ENCODE measurements at regions of chr4 and their contacts with region 1.

Region 1: DNA sequence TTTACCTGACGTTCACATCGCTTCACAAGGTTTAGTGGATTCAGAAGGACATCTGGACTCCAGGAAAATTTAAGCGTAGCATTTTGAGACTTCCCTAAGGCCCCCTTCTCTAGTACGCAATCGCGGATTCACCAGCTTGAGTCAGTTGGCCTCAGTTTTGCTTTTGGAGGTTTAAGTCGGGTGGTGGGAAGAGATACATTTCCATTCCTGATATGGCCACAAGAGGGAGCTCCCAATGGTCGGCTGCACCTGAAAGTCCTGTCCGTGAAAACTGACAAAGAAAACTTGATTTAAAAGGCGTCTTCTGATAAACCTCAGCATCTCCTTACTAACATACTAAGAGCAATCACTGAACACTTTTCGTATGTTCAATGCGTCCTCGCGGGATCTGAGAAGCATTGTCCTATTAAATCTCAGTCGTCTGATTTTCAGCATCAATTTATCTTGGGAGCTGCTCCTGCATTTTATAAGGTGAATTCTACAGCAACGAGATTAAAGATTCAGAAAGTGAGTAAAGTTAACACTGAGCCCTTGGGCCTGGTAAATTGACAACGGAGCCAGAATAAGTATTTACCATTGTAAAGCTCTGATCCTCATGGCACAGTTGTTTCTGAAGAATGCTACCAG is 50.6 kb downstream of the LGI2 start:
- DNase-seq: peak; percentile 56 to 67
- H3K4me3 ChIP-seq: peak overlapping the region; percentile 9 to 23
- H3K27ac ChIP-seq: peak overlapping the region in 1 of 2 donors; percentile 45
- H3K4me1 ChIP-seq: peaks cover 0 to 4% (median 0%) of the 10 kb centered on the region in 4 donors
- H3K27me3 ChIP-seq: no peaks in the 10 kb centered on the region
- CTCF ChIP-seq: peak; percentile 82 to 85

Region 2: GRCh38 chr4:24488399-24489164 is 491.6 kb before region 1 on chr4:
- intact Hi-C with region 1: loop called (anchors 10 kb)
- DNase-seq: peak; percentile 75 to 76
- H3K4me3 ChIP-seq: no peak overlapping the region
- H3K27ac ChIP-seq: no peak overlapping the region
- H3K4me1 ChIP-seq: no peaks in the 10 kb centered on the region
- H3K27me3 ChIP-seq: no peaks in the 10 kb centered on the region
- CTCF ChIP-seq: peak; percentile 69 to 83

Region 3: GRCh38 chr4:24642981-24643547 is 337.1 kb before region 1 on chr4:
- intact Hi-C with region 1: no loop called
- DNase-seq: no peak
- H3K4me3 ChIP-seq: no peak overlapping the region
- H3K27ac ChIP-seq: no peak overlapping the region
- H3K4me1 ChIP-seq: peaks cover 0 to 9% (median 0%) of the 10 kb centered on the region in 4 donors
- H3K27me3 ChIP-seq: no peaks in the 10 kb centered on the region
- CTCF ChIP-seq: no peak

Region 4: DNA sequence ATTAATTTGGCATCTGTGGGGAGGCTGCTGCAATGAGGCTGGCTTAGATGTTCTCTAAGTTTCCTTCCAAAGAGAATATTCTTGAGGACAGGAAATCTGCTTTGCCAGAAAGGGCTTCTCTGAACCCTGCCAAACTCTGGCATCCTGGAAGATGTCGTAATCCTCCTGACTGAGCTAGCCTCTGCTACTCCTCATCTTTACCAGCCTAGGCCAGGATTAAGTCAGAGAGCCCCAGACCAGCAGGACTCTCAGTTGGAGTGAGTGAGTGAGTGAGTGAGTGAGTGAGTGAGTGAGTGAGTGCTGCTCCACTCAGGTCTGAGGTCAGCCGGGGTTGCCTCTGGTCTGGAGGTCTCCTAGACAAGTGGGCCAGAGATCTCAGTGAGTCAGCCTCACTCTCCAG is 289.7 kb before region 1 on chr4:
- intact Hi-C with region 1: no loop called
- DNase-seq: no peak
- H3K4me3 ChIP-seq: no peak overlapping the region
- H3K27ac ChIP-seq: no peak overlapping the region
- H3K4me1 ChIP-seq: no peaks in the 10 kb centered on the region
- H3K27me3 ChIP-seq: no peaks in the 10 kb centered on the region
- CTCF ChIP-seq: no peak

Region 5: DNA sequence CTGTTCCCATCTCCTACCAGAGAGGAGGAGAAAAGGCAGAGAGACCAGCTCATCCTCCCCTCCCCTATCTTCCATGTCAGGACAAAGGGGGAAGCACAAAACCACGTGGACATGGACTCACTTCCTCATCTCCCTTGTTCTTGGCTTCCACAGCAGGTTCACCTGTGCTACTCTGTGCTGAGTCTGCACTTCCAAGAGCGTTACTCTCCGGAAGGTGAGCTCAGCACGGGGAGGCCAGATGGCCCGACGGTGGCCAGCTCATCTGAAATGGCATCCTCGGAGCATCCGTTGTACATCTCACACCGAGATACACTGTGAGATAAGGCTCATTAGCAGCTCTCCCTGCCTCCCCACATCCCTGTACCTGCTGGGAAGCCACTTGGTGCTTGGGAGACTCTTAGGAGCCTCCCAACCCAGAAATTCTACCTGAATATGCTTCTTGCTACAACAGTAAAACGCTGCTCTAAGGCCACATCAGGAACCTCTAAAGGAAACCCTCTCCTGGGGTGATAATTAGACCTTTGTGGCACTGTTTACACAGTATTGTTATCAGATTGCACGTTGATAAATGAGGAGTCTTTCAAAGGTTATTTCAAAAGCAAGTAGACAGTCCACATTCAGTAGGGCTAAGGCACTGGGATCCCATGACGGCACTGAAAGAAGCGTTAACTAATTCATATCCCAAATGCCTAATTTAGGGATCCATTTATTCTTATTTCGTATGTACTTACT is 31.1 kb after region 1 on chr4:
- intact Hi-C with region 1: loop called (anchors 1 kb)
- DNase-seq: no peak
- H3K4me3 ChIP-seq: no peak overlapping the region
- H3K27ac ChIP-seq: no peak overlapping the region
- H3K4me1 ChIP-seq: peaks cover 0 to 25% (median 2%) of the 10 kb centered on the region in 4 donors
- H3K27me3 ChIP-seq: no peaks in the 10 kb centered on the region
- CTCF ChIP-seq: no peak

Region 6: DNA sequence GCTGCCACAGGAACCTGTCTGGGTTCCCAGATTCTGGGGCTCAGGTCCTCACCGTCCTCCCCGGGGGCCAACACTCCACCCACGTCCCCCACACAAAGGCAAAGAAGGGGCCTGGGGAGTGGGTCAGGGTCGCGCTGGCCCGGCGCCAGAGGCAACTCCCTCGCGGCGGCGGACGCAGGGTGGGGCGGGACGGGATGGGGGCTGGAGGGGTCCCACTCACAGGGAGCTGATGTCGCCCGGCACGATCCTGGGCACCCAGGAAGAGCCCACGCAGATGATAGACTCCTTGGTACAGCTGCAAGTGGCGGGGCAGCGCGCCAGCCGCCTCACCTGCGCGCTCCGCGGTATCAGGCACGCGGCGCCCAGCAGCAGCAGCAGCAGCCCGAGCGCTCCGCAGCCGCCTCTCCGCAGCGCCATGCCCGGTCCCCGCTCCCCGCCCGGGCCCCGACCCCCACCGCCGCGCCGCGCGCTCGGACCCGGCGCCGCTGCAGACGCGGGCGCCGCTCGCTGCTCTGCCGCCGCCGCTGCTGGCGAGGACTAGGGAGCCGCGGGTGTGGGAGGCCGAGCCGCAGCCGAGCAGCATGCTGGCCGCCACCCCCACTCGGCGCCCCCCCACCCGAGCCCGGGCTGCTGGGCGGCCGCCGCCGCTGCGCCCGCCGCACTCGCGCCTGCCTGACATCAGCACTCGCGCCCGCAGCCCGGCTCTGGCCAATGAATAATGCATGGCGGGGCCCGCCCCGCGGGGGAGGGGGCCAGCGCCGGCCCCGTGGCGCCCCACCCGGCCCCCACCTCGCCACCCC is 50.3 kb after region 1 on chr4 and contains the start of gene LGI2:
- intact Hi-C with region 1: loop called (anchors 10 kb)
- DNase-seq: peak; percentile 51 to 80
- H3K4me3 ChIP-seq: peak within 1 kb of the TSS; percentile 61 to 64
- H3K27ac ChIP-seq: peak within 1 kb of the TSS; percentile 63 to 74
- H3K4me1 ChIP-seq: peaks cover 0 to 25% (median 14%) of the 10 kb centered on the region in 4 donors
- H3K27me3 ChIP-seq: no peaks in the 10 kb centered on the region
- CTCF ChIP-seq: no peak

Region 7: GRCh38 chr4:25144870-25145481 is 164.8 kb after region 1 on chr4:
- intact Hi-C with region 1: loop called (anchors 5 kb)
- DNase-seq: no peak
- H3K4me3 ChIP-seq: no peak overlapping the region
- H3K27ac ChIP-seq: no peak overlapping the region
- H3K4me1 ChIP-seq: no peaks in the 10 kb centered on the region
- H3K27me3 ChIP-seq: no peaks in the 10 kb centered on the region
- CTCF ChIP-seq: peak; percentile 37 to 42